PC-3 (cell line): ENCODE measurements at regions of chr12 and their contacts with region 1.

Region 1: GRCh38 chr12:116910645-116911451 is at the start of gene FBXW8:
- DNase-seq: peak; percentile 83
- ATAC-seq: peak; percentile 90
- H3K4me3 ChIP-seq: peak within 1 kb of the TSS; percentile 67
- H3K27ac ChIP-seq: peak within 1 kb of the TSS; percentile 58
- H3K4me1 ChIP-seq: peaks cover 18% of the 10 kb centered on the region
- H3K27me3 ChIP-seq: no peaks in the 10 kb centered on the region
- CTCF ChIP-seq: no peak
- total RNA-seq, gene FBXW8: 12.1 and 20.7 TPM in 2 replicates

Region 2: DNA sequence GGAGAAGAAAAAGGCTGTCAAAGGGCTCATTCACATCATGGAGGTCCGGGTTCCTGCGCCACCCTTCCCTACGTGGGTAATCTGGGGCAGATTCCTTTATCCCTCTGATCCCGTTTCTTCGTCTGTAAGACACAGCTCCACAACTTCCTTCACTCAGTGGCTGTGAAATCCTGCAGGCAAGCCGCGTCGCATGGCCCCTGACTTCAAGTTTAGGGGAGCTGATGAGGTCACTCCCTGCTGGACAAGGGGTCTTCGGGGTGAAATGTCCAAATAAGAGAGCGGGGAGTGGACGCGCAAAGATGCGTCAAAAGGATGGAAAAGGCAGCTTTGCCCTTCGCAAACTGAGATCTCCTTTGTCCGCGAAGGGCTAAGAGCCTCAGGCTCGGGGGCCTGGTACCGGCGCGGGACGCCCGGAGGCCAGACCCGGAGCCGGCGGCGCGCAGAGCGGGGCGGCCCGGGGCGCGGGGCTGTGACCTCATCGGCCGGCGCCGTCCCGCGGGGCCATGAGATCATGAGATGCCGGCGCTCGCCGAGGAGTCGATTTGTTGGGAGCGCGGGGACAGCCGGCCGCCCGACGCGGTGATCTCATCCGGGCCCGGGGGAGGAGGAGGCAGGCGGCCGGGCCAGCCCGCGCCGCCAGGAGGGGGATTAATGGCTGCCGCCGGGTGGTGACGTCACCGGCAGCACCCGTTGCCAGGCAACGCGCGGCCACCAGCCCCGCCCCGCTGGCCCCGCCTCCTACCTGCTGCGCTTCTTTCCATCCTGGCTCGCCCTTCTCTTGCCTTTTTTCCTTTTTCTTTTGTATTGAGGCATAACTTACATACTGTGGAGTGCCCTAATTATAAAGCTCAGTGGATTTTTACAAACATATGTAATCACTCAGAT is 91.7 kb before region 1 on chr12:
- CTCF ChIA-PET with region 1: no interaction called
- POLR2A ChIA-PET with region 1: no interaction called
- intact Hi-C with region 1: loop called (anchors 10 kb)
- DNase-seq: peak; percentile 92
- ATAC-seq: peak; percentile 92
- H3K4me3 ChIP-seq: peak overlapping the region; percentile 86
- H3K27ac ChIP-seq: peak overlapping the region; percentile 73
- H3K4me1 ChIP-seq: peaks cover 10% of the 10 kb centered on the region
- H3K27me3 ChIP-seq: no peaks in the 10 kb centered on the region
- CTCF ChIP-seq: no peak

Region 3: GRCh38 chr12:117047810-117048584 is 137.1 kb after region 1 on chr12:
- CTCF ChIA-PET with region 1: no interaction called
- POLR2A ChIA-PET with region 1: no interaction called
- intact Hi-C with region 1: no loop called
- DNase-seq: no peak
- ATAC-seq: peak; percentile 26; the same call in 1 of the 2 replicates
- H3K4me3 ChIP-seq: no peak overlapping the region
- H3K27ac ChIP-seq: no peak overlapping the region
- H3K4me1 ChIP-seq: 0 out of 2 replicates have a peak, but pooled peaks cover 4% of the 10 kb centered on the region
- H3K27me3 ChIP-seq: peaks cover 13% of the 10 kb centered on the region; the same call in 1 of the 2 replicates
- CTCF ChIP-seq: no peak